Esophagus squamous epithelium (tissue), 5 donors: ENCODE measurements at regions of chr15 and their contacts with region 1.

Region 1: DNA sequence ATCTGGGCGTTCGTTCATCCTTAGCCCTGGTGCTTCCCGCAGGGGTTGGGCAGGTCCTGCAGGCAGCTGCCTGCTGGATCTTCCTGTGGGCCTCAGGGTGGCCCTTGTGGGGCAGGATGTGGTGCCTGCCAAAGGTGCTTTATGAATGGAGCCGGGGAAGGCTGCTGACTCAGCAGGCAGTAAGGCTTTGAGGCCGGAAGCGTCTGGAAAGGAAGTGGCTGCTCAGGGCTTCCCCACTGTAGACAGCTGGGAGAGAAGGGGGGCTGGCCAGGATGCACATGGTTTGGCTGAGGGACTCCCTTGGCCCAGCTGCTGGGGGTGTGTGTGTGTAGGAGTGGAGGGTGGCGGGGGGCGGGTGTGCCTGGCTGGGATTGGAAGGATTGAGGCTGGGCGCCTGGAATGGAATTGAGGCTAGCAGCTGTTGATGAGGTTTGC is 12.9 kb downstream of the CD276 start:
- DNase-seq: peak; percentile 42
- H3K4me3 ChIP-seq: no peak overlapping the region
- H3K27ac ChIP-seq: peak overlapping the region; percentile 31 to 55 (median 38)
- H3K4me1 ChIP-seq: peaks cover 16 to 41% (median 35%) of the 10 kb centered on the region in 3 donors
- H3K27me3 ChIP-seq: peaks cover 0 to 31% (median 0%) of the 10 kb centered on the region in 4 donors
- CTCF ChIP-seq: peak in 1 of 6 experiments; percentile 24
- POLR2A ChIP-seq: no peak

Region 2: DNA sequence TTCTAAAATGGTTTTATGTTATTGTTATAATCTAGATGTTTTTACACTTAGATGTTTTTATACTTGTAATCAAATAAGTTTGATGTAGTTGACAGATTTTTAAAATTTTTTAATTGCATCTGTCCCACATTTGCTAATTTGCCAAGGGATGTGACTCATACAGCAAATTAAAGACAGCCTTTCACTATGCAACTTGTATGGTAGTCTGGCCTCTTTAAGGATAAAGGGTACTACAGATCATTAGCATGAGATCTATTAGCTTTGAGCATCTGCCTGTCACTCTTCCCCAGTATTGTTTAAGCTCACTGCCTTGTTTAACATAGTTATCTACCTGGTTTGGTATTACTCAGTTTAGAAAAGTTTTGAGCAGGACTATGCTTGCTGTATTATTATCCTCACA is 146.9 kb before region 1 on chr15:
- intact Hi-C with region 1: loop called (anchors 10 kb)
- DNase-seq: no peak
- H3K4me3 ChIP-seq: no peak overlapping the region
- H3K27ac ChIP-seq: no peak overlapping the region
- H3K4me1 ChIP-seq: no peaks in the 10 kb centered on the region
- H3K27me3 ChIP-seq: no peaks in the 10 kb centered on the region
- CTCF ChIP-seq: no peak
- POLR2A ChIP-seq: no peak

Region 3: GRCh38 chr15:73637527-73637926 is 59.5 kb before region 1 on chr15:
- intact Hi-C with region 1: loop called (anchors 5 kb)
- DNase-seq: no peak
- H3K4me3 ChIP-seq: no peak overlapping the region
- H3K27ac ChIP-seq: no peak overlapping the region
- H3K4me1 ChIP-seq: peaks cover 10 to 22% (median 12%) of the 10 kb centered on the region in 3 donors
- H3K27me3 ChIP-seq: peaks cover 0 to 33% (median 0%) of the 10 kb centered on the region in 4 donors
- CTCF ChIP-seq: no peak
- POLR2A ChIP-seq: no peak